Heart right ventricle (tissue), 16 donors: ENCODE measurements at regions of chr1 and their contacts with region 1.

Region 1: DNA sequence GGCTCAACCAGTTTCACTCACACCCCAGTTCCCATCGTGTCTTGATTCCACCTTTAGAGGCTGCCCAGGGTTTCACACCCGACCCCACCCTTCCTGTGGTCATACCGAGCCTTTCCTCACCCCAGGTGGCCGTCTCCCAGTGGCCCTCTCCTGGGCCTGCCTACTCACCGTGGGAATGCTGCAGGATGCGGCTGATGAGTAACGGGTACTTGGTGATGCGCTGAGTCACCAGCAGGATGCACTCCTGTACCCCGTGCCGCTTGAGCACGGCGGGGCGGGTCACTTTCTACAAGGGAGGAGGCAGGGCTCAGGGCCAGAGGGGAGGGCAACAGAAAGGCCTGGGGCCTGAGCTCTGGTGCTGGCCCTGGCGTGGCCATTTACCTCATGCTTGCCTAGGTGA is 16.4 kb downstream of the ARHGEF2 start:
- DNase-seq: peak; percentile 65 to 66
- ATAC-seq: peak; percentile 45 to 85 (median 70)
- H3K4me3 ChIP-seq: no peak overlapping the region
- H3K27ac ChIP-seq: peak overlapping the region; percentile 40 to 87 (median 76)
- H3K4me1 ChIP-seq: peaks cover 21 to 73% (median 55%) of the 10 kb centered on the region in 9 donors
- H3K27me3 ChIP-seq: no peaks in the 10 kb centered on the region
- CTCF ChIP-seq: peak in 7 of 9 donors; percentile 18 to 56 (median 39)

Region 2: GRCh38 chr1:155329971-155330598 is 631.9 kb before region 1 on chr1:
- intact Hi-C with region 1: no loop called
- DNase-seq: no peak
- ATAC-seq: no peak
- H3K4me3 ChIP-seq: no peak overlapping the region
- H3K27ac ChIP-seq: no peak overlapping the region
- H3K4me1 ChIP-seq: peaks cover 0 to 15% (median 7%) of the 10 kb centered on the region in 9 donors
- H3K27me3 ChIP-seq: no peaks in the 10 kb centered on the region
- CTCF ChIP-seq: no peak

Region 3: DNA sequence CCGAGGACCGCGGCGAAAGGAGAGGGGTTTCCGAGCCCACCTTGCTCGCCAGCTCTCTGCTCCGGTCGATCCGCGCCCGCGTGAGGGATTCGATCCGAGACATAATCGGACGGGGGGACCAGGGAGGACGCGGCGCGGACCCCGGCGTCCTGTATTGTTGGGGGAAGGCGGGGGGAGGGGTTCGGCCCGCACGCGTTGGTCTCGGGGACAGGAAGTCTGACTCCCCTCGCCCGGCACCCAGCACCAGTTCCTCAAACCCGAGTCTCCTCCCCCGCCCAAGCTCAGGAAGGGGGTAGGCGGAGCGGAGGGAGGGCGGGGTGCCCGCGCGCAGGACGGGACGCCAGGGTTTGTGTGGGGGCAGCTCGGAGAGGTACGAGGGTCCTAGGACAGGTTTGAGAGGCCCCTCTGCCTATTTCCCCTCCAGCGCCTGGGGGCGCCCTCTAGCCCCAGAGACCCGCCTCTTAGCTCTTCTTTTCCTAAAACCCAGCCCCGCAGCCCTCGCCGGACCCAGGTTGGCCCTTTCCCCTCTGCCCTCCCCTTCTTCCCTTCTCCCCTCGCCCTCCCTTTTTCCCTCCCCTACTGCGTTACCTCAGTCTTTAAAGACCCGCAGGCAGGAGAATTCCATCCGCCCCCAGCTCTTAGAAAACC is 16.5 kb after region 1 on chr1 and contains the start of gene ARHGEF2:
- intact Hi-C with region 1: loop called in 1 of 10 experiments (anchors 2 kb)
- DNase-seq: peak; percentile 87
- ATAC-seq: peak; percentile 64 to 82 (median 76)
- H3K4me3 ChIP-seq: peak within 1 kb of the TSS; percentile 66 to 97 (median 88)
- H3K27ac ChIP-seq: peak within 1 kb of the TSS; percentile 86 to 99 (median 96)
- H3K4me1 ChIP-seq: peaks cover 34 to 89% (median 80%) of the 10 kb centered on the region in 9 donors
- H3K27me3 ChIP-seq: no peaks in the 10 kb centered on the region
- CTCF ChIP-seq: peak in 7 of 9 donors; percentile 12 to 55 (median 31)
- total RNA-seq, gene ARHGEF2: 48.6 to 79.8 (median 58.2) TPM